ENCODE measurements at regions of chr4 and their contacts with region 1.

Region 1: DNA sequence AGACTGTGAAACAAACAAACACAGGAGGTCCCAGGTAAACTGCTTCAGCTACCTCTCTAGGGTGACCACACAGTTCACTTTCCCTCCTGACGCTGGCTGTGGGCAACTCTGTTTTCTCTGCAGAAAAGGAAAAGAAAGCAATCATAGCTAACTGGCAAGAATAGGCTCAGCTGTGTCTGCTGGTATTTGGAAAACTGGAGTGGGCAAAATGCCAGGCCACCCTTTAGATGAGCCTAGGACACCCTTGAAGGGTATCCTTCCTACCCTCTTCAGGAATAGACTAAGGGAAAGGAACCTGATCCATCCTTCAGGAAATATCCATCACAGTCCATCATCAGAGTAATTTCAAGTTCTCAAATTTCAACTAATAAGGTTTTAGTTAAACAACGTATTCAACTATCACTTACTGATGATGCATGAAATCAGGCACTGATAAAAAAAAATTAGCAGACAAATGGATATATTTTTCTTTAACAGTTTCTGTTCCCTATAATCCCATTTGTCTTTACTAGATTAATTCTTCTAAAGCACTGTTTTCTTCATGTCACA is 60.9 kb downstream of the CAMK2D start:
- DNase-seq: no peak
- ATAC-seq: no peak
- H3K4me3 Mint-ChIP-seq: no peak overlapping the region
- H3K27ac Mint-ChIP-seq: peak overlapping the region; percentile 25
- H3K4me1 Mint-ChIP-seq: peaks cover 39% of the 10 kb centered on the region
- H3K27me3 Mint-ChIP-seq: no peaks in the 10 kb centered on the region
- CTCF ChIP-seq: no peak

Region 2: GRCh38 chr4:112889619-112890527 is 810.8 kb before region 1 on chr4:
- CTCF ChIA-PET with region 1: no interaction called
- POLR2A ChIA-PET with region 1: no interaction called
- intact Hi-C with region 1: no loop called
- DNase-seq: no peak
- ATAC-seq: no peak
- H3K4me3 Mint-ChIP-seq: peak overlapping the region; percentile 12
- H3K27ac Mint-ChIP-seq: no peak overlapping the region
- H3K4me1 Mint-ChIP-seq: peaks cover 4% of the 10 kb centered on the region
- H3K27me3 Mint-ChIP-seq: peaks cover 6% of the 10 kb centered on the region
- CTCF ChIP-seq: no peak

Region 3: DNA sequence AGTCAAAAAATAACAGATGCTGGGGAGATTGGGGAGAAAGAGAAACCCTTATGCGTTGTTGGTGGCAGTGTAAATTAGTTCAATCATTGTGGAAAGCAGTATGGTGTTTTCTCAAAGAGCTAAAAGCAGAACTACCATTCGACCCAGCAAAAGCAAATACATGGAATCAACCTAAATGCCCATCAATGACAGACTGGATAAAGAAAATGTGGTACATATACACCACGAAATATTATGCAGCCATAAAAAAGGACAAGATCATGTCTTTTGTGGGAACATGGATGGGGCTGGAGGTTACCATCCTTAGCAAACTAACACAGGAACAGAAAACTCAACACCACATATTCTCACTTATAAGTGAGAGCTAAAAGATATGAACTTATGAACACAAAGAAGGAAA is 128.1 kb before region 1 on chr4:
- CTCF ChIA-PET with region 1: no interaction called
- POLR2A ChIA-PET with region 1: no interaction called
- intact Hi-C with region 1: no loop called
- DNase-seq: no peak
- ATAC-seq: no peak
- H3K4me3 Mint-ChIP-seq: no peak overlapping the region
- H3K27ac Mint-ChIP-seq: peak overlapping the region; percentile 9
- H3K4me1 Mint-ChIP-seq: peaks cover 89% of the 10 kb centered on the region
- H3K27me3 Mint-ChIP-seq: no peaks in the 10 kb centered on the region
- CTCF ChIP-seq: no peak

Region 4: DNA sequence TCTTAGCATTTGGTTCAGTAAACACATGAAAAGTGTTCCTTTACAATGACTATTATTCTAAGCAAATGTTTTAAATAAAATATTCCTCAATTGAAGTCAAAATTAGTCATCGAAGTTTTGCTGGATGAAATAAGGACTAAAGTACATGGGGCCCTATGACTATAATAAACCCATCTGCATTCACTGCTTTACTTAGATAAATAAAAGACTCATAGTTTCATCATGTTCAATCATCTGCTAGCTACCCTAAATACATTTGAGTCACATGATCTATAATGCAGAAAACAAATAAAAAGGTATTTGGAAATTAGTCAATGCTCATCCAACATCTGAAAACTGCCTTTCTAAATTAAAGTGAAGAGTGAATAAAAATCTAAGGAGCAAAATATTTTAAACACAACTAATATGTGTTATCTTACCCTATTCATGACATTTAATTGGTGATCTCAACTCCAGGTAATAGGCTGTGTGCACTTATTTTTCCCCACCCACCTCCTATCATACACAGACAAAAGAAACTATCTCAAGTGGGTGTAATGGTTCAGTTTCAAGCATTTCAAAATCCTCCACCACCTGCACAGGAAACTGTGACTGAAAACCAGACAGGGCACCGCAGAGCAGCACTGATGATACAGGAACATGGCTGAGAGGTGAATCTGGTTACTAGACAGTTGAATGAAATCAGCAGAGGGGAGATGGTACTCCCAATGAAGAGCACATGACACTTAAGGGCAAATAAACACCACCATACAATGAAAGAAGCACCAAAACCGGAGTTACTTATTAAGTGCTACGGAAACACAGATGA is 17.7 kb before region 1 on chr4:
- CTCF ChIA-PET with region 1: no interaction called
- POLR2A ChIA-PET with region 1: no interaction called
- intact Hi-C with region 1: loop called (anchors 2 kb)
- DNase-seq: peak; percentile 33
- ATAC-seq: peak; percentile 93
- H3K4me3 Mint-ChIP-seq: peak overlapping the region; percentile 13
- H3K27ac Mint-ChIP-seq: peak overlapping the region; percentile 70
- H3K4me1 Mint-ChIP-seq: peaks cover 53% of the 10 kb centered on the region
- H3K27me3 Mint-ChIP-seq: no peaks in the 10 kb centered on the region
- CTCF ChIP-seq: no peak

Region 5: GRCh38 chr4:113727802-113728201 is 27.1 kb after region 1 on chr4:
- CTCF ChIA-PET with region 1: no interaction called
- POLR2A ChIA-PET with region 1: no interaction called
- intact Hi-C with region 1: no loop called
- DNase-seq: no peak
- ATAC-seq: no peak
- H3K4me3 Mint-ChIP-seq: no peak overlapping the region
- H3K27ac Mint-ChIP-seq: no peak overlapping the region
- H3K4me1 Mint-ChIP-seq: peaks cover 56% of the 10 kb centered on the region
- H3K27me3 Mint-ChIP-seq: no peaks in the 10 kb centered on the region
- CTCF ChIP-seq: no peak

Region 6: GRCh38 chr4:113738251-113738650 is 37.6 kb after region 1 on chr4:
- CTCF ChIA-PET with region 1: no interaction called
- POLR2A ChIA-PET with region 1: no interaction called
- intact Hi-C with region 1: loop called (anchors 5 kb)
- DNase-seq: no peak
- ATAC-seq: no peak
- H3K4me3 Mint-ChIP-seq: no peak overlapping the region
- H3K27ac Mint-ChIP-seq: peak overlapping the region; percentile 44
- H3K4me1 Mint-ChIP-seq: peaks cover 66% of the 10 kb centered on the region
- H3K27me3 Mint-ChIP-seq: no peaks in the 10 kb centered on the region
- CTCF ChIP-seq: no peak

Region 7: DNA sequence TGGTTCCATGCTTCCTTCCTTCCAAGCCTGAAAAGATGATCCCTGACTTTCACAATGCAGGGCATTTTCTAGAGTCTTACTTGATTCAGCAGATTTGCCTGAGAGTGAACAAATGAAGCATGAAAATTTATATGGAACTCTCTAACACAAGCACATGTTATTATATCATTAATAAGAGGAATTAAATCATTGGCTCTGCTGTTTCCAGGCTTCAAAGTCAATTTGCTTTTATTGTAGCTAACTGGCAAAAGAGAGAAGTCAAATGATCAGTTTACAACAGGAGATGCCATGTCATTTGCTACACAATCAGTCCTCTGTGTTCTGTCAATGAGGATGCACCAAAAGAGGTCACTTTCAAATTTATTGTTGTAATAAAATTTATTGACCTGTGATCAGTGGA is 796.4 kb after region 1 on chr4:
- CTCF ChIA-PET with region 1: no interaction called
- POLR2A ChIA-PET with region 1: no interaction called
- intact Hi-C with region 1: no loop called
- DNase-seq: no peak
- ATAC-seq: no peak
- H3K4me3 Mint-ChIP-seq: no peak overlapping the region
- H3K27ac Mint-ChIP-seq: no peak overlapping the region
- H3K4me1 Mint-ChIP-seq: no peaks in the 10 kb centered on the region
- H3K27me3 Mint-ChIP-seq: no peaks in the 10 kb centered on the region
- CTCF ChIP-seq: no peak

Measured in activated B cell treated with CpG ODN at 0.5 μM for 24 hours (primary cell).